H1 (cell line): ENCODE measurements at regions of chr1 and their contacts with region 1.

Region 1: DNA sequence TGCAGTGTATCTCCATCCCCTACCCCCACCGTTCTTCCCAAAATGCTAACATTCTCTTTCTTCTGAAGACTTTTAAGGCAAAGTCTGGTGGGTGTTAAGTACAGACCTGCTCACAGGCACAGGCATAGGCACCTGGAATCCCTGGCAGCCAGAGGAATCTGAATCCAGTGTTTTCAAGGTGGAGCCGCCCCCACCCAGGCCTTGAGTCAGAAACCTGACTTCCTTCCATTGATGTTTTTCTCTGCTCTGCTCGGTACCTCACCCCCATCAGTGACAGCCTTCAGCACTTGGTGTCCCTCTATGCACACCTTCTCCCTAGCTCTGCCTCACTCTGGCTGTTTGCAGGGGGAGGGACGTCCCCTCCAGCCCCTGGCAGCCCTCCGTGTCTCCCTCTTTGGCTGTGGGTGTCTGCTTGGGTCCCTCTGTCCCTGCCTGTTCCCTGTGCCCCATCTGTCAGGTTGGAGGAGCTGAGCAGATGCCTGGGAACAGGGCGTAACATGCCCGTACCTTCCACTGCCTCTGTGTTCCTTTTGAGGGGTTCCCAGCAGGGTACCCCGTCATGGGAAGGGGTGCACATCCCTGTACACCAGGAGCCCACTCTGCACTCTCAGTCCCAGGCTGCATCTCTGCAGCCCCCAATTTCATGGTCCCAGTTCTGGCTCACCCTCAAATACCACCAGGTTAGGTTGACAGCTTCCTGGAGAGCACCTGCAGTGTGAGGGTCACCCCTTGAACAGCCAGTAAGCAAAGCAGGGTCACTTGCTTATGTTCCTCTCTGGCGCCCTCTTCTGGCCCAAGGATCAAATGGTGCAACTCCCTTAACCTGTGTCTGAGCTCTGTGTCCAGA is 6.7 kb downstream of the NCDN start:
- DNase-seq: peak in 1 of 2 experiments; percentile 94
- H3K4me3 ChIP-seq: no peak overlapping the region
- H3K27ac ChIP-seq: no peak overlapping the region
- H3K4me1 ChIP-seq: 0 out of 7 replicates have a peak, but pooled peaks cover 0 to 2% (median 0%) of the 10 kb centered on the region in 4 experiments
- H3K27me3 ChIP-seq: peaks cover 0 to under 1% (median 0%) of the 10 kb centered on the region in 4 experiments; a peak in 1 of 7 replicates
- CTCF ChIP-seq: peak in 2 of 3 experiments; percentile 86 to 91; a peak in 3 of 4 replicates
- EP300 ChIP-seq: peak in 1 of 2 experiments; percentile 37; a peak in 1 of 3 replicates
- POLR2A ChIP-seq: no peak
- RAD21 ChIP-seq: peak; percentile 64 to 77

Region 2: DNA sequence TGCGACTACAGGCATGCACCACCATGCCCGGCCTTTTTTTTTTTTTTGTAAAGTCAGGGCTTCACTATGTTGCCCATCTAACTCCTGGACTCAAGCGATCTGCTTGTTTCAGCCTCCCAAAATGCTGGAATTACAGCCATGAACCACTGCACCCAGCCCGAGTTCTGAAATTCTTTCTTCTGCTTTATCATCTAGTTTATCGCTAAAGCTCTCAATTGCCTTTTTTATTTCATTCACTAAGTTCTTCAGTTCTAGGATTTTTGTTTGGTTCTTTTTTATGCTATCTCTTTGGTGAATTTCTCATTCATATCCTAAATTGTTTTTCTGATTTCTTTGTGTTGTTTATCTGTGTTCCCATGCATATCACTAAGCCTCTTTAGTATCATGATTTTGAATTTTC is 34.1 kb before region 1 on chr1:
- CTCF ChIA-PET with region 1: no interaction called
- POLR2A ChIA-PET with region 1: no interaction called
- DNase-seq: no peak
- H3K4me3 ChIP-seq: no peak overlapping the region
- H3K27ac ChIP-seq: no peak overlapping the region
- H3K4me1 ChIP-seq: no peaks in the 10 kb centered on the region; a peak in 2 of 7 replicates
- H3K27me3 ChIP-seq: no peaks in the 10 kb centered on the region
- CTCF ChIP-seq: no peak
- EP300 ChIP-seq: no peak
- POLR2A ChIP-seq: no peak
- RAD21 ChIP-seq: no peak

Region 3: GRCh38 chr1:35544978-35545377 is 19.3 kb before region 1 on chr1:
- CTCF ChIA-PET with region 1: interaction called, 11 read pairs
- POLR2A ChIA-PET with region 1: interaction called, 4 read pairs
- DNase-seq: peak in 1 of 2 experiments; percentile 46
- H3K4me3 ChIP-seq: no peak overlapping the region
- H3K27ac ChIP-seq: no peak overlapping the region
- H3K4me1 ChIP-seq: peaks cover 0 to 3% (median 0%) of the 10 kb centered on the region in 4 experiments; a peak in 1 of 7 replicates
- H3K27me3 ChIP-seq: no peaks in the 10 kb centered on the region
- CTCF ChIP-seq: peak; percentile 67 to 94 (median 80)
- EP300 ChIP-seq: no peak
- POLR2A ChIP-seq: no peak
- RAD21 ChIP-seq: peak; percentile 92

Region 4: DNA sequence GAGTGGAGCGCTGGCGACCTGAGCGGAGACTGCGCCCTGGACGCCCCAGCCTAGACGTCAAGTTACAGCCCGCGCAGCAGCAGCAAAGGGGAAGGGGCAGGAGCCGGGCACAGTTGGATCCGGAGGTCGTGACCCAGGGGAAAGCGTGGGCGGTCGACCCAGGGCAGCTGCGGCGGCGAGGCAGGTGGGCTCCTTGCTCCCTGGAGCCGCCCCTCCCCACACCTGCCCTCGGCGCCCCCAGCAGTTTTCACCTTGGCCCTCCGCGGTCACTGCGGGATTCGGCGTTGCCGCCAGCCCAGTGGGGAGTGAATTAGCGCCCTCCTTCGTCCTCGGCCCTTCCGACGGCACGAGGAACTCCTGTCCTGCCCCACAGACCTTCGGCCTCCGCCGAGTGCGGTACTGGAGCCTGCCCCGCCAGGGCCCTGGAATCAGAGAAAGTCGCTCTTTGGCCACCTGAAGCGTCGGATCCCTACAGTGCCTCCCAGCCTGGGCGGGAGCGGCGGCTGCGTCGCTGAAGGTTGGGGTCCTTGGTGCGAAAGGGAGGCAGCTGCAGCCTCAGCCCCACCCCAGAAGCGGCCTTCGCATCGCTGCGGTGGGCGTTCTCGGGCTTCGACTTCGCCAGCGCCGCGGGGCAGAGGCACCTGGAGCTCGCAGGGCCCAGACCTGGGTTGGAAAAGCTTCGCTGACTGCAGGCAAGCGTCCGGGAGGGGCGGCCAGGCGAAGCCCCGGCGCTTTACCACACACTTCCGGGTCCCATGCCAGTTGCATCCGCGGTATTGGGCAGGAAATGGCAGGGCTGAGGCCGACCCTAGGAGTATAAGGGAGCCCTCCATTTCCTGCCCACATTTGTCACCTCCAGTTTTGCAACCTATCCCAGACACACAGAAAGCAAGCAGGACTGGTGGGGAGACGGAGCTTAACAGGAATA is 13.1 kb after region 1 on chr1:
- CTCF ChIA-PET with region 1: interaction called, 63 read pairs
- POLR2A ChIA-PET with region 1: interaction called, 8 read pairs
- DNase-seq: peak in 1 of 2 experiments; percentile 79
- H3K4me3 ChIP-seq: peak overlapping the region; percentile 30 to 58 (median 46)
- H3K27ac ChIP-seq: no peak overlapping the region
- H3K4me1 ChIP-seq: peaks cover 7 to 20% (median 15%) of the 10 kb centered on the region in 4 experiments
- H3K27me3 ChIP-seq: peaks cover 60 to 69% (median 67%) of the 10 kb centered on the region in 4 experiments
- CTCF ChIP-seq: no peak
- EP300 ChIP-seq: no peak
- POLR2A ChIP-seq: no peak
- RAD21 ChIP-seq: no peak

Region 5: GRCh38 chr1:35585281-35585680 is 21.0 kb after region 1 on chr1:
- CTCF ChIA-PET with region 1: interaction called, 63 read pairs
- POLR2A ChIA-PET with region 1: interaction called, 3 read pairs
- DNase-seq: no peak
- H3K4me3 ChIP-seq: no peak overlapping the region
- H3K27ac ChIP-seq: no peak overlapping the region
- H3K4me1 ChIP-seq: peaks cover 0 to 8% (median 3%) of the 10 kb centered on the region in 4 experiments; a peak in 3 of 7 replicates
- H3K27me3 ChIP-seq: peaks cover 0 to 2% (median 0%) of the 10 kb centered on the region in 4 experiments; a peak in 1 of 7 replicates
- CTCF ChIP-seq: no peak
- EP300 ChIP-seq: no peak
- POLR2A ChIP-seq: no peak
- RAD21 ChIP-seq: no peak

Region 6: GRCh38 chr1:35980090-35980489 is 415.8 kb after region 1 on chr1:
- CTCF ChIA-PET with region 1: no interaction called
- POLR2A ChIA-PET with region 1: no interaction called
- DNase-seq: no peak
- H3K4me3 ChIP-seq: no peak overlapping the region
- H3K27ac ChIP-seq: no peak overlapping the region
- H3K4me1 ChIP-seq: no peaks in the 10 kb centered on the region
- H3K27me3 ChIP-seq: no peaks in the 10 kb centered on the region
- CTCF ChIP-seq: no peak
- EP300 ChIP-seq: no peak
- POLR2A ChIP-seq: no peak
- RAD21 ChIP-seq: no peak